Activated T-helper 2 cell treated with anti-CD3 and anti-CD28 coated beads, Interferon-gamma antibody, Interleukin-2, Interleukin-4, amounts not matched to agents 10 μg/mL and 5 μg/mL and 100 μg/mL, durations not matched to agents 14 hours and 24 hours and 36 hours (primary cell): ENCODE measurements at regions of chr10 and their contacts with region 1.

Region 1: DNA sequence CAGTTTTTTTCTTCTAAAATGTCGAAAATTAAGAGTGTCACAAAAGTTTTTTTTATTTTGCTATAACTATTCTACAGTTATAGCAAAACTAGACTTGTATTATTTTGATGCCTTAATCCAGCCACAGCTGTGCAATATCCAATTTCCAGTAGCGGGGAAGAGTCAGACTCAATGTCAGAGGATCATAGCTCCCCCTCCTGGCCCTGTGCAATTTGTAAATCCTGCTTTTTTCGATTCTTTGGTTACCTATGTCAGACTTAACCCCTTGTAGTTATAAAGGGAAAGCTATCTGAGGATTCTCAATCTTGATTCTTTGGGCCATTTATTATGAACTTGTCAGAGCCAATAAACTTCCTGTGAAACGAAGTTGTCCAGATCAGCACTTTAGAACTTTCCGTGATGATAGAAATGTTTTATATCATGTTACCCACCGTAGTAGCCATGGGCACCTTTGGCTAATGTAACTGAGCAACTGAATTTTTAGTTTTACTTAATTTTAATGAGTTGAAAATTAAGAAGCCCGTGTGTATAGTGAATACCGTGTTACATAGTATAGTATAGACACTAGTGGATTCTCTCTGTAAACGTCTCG is 87.7 kb upstream of the PRKCQ start:
- DNase-seq: no peak
- H3K4me3 Mint-ChIP-seq: no peak overlapping the region
- H3K27ac Mint-ChIP-seq: no peak overlapping the region
- H3K4me1 Mint-ChIP-seq: peaks cover 40% of the 10 kb centered on the region
- H3K27me3 Mint-ChIP-seq: no peaks in the 10 kb centered on the region

Region 2: GRCh38 chr10:6416892-6417512 is 250.8 kb before region 1 on chr10:
- intact Hi-C with region 1: loop called (anchors 1 kb)
- DNase-seq: no peak
- H3K4me3 Mint-ChIP-seq: no peak overlapping the region
- H3K27ac Mint-ChIP-seq: no peak overlapping the region
- H3K4me1 Mint-ChIP-seq: peaks cover 5% of the 10 kb centered on the region
- H3K27me3 Mint-ChIP-seq: no peaks in the 10 kb centered on the region

Region 3: GRCh38 chr10:6423004-6423403 is 244.8 kb before region 1 on chr10:
- intact Hi-C with region 1: loop called (anchors 1 kb)
- DNase-seq: no peak
- H3K4me3 Mint-ChIP-seq: no peak overlapping the region
- H3K27ac Mint-ChIP-seq: peak overlapping the region; percentile 88
- H3K4me1 Mint-ChIP-seq: peaks cover 26% of the 10 kb centered on the region
- H3K27me3 Mint-ChIP-seq: no peaks in the 10 kb centered on the region

Region 4: GRCh38 chr10:6473901-6474370 is 193.8 kb before region 1 on chr10:
- intact Hi-C with region 1: loop called (anchors 2 kb)
- DNase-seq: no peak
- H3K4me3 Mint-ChIP-seq: peak overlapping the region; percentile 83
- H3K27ac Mint-ChIP-seq: peak overlapping the region; percentile 95
- H3K4me1 Mint-ChIP-seq: peaks cover 60% of the 10 kb centered on the region
- H3K27me3 Mint-ChIP-seq: no peaks in the 10 kb centered on the region

Region 5: GRCh38 chr10:6647811-6648526 is 19.8 kb before region 1 on chr10:
- intact Hi-C with region 1: loop called (anchors 2 kb)
- DNase-seq: peak; percentile 53
- H3K4me3 Mint-ChIP-seq: no peak overlapping the region
- H3K27ac Mint-ChIP-seq: no peak overlapping the region
- H3K4me1 Mint-ChIP-seq: peaks cover 47% of the 10 kb centered on the region
- H3K27me3 Mint-ChIP-seq: no peaks in the 10 kb centered on the region

Region 6: GRCh38 chr10:6755781-6756460 is 88.1 kb after region 1 on chr10:
- intact Hi-C with region 1: no loop called
- DNase-seq: no peak
- H3K4me3 Mint-ChIP-seq: no peak overlapping the region
- H3K27ac Mint-ChIP-seq: no peak overlapping the region
- H3K4me1 Mint-ChIP-seq: no peaks in the 10 kb centered on the region
- H3K27me3 Mint-ChIP-seq: peaks cover 36% of the 10 kb centered on the region

Region 7: GRCh38 chr10:6766131-6766801 is 98.5 kb after region 1 on chr10:
- intact Hi-C with region 1: no loop called
- DNase-seq: no peak
- H3K4me3 Mint-ChIP-seq: no peak overlapping the region
- H3K27ac Mint-ChIP-seq: no peak overlapping the region
- H3K4me1 Mint-ChIP-seq: peaks cover 5% of the 10 kb centered on the region
- H3K27me3 Mint-ChIP-seq: peaks cover 23% of the 10 kb centered on the region

Region 8: DNA sequence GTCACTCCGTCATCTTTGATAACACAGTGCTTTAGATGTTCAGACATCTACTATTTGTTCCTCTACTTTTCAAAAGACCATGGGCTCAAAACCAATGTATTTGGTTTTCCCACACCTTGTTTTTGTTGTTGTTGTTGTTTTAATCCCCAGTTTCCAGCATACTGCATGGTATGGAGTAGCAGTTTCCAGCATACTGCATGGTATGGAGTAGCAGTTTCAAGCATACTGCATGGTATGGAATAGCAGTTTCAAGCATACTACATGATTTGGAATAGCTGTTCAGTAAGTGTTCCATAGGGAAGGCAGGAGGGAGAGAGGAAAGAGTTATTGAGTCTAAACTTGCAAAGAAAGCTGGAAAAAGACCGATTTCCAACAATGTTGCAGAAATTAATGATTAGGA is 226.6 kb after region 1 on chr10:
- intact Hi-C with region 1: no loop called
- DNase-seq: no peak
- H3K4me3 Mint-ChIP-seq: no peak overlapping the region
- H3K27ac Mint-ChIP-seq: no peak overlapping the region
- H3K4me1 Mint-ChIP-seq: no peaks in the 10 kb centered on the region
- H3K27me3 Mint-ChIP-seq: peaks cover 20% of the 10 kb centered on the region

Region 9: DNA sequence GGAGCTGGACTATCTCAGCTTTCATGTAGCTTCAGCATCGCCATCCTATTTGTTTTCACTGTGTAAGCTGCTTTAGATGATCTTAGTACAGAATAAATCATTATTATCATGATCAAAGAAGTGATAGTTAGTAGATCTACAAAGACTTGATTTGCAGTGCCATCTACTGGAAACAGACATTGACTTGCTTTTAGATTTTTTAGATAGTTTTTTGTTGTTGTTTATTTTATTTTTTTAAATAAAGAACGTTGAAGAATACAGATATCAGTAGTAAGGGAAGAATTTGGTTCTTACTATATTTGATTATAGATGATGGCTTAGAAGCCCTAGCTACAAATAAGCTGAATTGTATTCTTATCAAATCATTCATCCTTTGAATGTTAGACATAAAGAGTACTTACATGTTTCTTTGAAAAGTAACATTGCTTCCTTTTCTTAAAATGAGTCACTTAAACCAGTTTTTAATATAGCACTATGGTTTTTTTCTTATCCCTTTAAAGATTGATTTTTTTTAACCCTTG is 749.4 kb after region 1 on chr10:
- intact Hi-C with region 1: loop called (anchors 2 kb)
- DNase-seq: no peak
- H3K4me3 Mint-ChIP-seq: no peak overlapping the region
- H3K27ac Mint-ChIP-seq: peak overlapping the region; percentile 33
- H3K4me1 Mint-ChIP-seq: peaks cover 24% of the 10 kb centered on the region
- H3K27me3 Mint-ChIP-seq: peaks cover 46% of the 10 kb centered on the region